GM10248 (cell line): ENCODE measurements at regions of chr14 and their contacts with region 1.

Region 1: GRCh38 chr14:58072288-58073071 is 79.5 kb downstream of the ARMH4 start:
- DNase-seq: peak; percentile 41
- CTCF ChIP-seq: peak; percentile 56

Region 2: DNA sequence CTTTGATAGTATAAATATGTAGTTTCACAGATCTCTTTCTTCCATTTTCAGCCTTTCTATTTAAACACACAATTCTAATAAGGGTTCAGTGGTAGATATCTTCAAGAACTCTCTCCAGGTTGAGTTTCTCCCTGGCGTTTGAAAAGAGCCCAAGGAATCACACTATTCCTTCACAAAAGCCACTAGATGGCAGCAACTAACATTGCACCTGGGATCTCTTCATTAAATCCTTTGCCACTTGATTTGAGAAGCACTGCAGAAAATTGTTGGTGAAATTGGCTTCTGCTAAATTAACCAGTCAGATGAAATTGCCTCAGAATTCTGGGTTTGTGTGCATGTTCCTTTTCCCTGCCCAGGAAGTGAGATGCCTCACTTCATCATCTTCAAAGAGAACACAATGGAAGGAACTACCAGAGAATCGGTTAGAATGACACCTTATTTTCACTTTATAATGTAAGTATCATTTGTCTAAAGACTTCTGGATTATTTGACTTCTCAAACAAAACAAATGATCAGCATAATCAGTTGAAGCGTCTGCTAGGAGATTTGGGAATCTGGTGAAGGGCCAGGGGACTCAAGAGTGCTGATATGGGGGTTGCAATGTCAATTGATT is 585.6 kb before region 1 on chr14:
- CTCF ChIA-PET with region 1: interaction called, 12 read pairs
- POLR2A ChIA-PET with region 1: no interaction called
- DNase-seq: no peak
- CTCF ChIP-seq: peak; percentile 49

Region 3: DNA sequence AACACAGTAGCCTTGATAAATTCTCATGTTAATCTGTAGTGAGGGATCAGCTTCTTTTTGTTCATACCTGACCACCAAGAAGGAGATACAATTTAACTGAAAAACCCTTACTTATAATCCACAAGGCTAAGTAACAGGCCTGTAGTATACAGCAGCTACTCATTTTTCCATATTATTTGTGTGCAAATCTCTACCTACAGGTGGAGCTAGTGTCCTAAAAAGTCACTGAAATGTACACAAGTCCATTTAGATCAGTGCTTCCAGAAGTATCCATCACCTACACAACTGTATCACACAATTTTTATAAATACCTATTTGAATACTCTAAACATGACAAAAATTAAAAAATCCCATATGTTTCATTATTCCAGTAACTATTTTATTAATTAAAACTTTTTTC is 379.8 kb before region 1 on chr14:
- CTCF ChIA-PET with region 1: interaction called, 15 read pairs
- POLR2A ChIA-PET with region 1: no interaction called
- DNase-seq: peak; percentile 8
- CTCF ChIP-seq: peak; percentile 32

Region 4: GRCh38 chr14:58060898-58061297 is 11.6 kb before region 1 on chr14:
- CTCF ChIA-PET with region 1: interaction called, 24 read pairs
- POLR2A ChIA-PET with region 1: no interaction called
- DNase-seq: no peak
- CTCF ChIP-seq: no peak

Region 5: DNA sequence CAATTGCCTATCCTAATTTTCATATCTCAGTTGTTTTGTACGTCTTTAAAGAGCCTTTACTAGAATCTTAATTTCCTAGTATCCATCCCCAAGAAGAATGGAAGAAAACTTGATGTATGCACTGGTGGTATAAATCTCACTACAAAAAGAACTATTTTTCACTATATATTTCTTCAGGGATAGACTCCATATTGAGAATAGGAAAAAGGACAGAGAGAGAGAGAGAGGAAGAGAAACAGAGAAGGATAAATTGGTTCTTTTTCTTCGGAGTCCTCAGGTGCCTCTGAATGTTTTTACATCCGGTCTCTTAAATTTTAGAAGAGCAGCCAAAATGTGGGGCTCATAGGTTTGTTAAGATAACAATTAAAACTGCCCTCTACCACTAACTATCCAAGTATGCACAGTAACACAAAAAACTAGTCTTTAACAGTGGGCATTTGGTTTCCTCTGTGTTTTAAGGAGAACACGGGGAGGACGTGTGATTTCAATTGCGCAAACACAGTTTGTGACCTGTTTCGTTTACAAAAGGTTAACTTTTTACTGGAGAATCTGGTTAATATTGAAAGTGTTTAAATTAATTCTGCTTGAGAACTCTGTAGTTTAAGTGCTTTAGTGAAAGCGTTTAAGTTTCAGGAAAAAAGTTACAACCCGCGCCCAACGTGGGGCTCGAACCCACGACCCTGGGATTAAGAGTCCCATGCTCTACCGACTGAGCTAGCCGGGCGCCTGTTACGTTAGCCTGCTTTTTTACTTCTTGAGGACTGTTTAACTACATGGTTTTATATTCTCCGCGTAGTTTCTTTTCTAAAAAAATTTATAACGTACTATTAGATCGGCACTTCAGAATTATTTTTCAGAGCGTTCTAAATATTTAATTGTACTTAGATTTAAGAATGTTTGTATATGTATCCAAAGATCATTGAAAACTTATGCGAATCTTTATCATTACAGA is 167.0 kb after region 1 on chr14:
- CTCF ChIA-PET with region 1: no interaction called
- POLR2A ChIA-PET with region 1: no interaction called
- DNase-seq: no peak
- CTCF ChIP-seq: no peak